ENCODE measurements at regions of chr6 and their contacts with region 1.

Region 1: GRCh38 chr6:2749969-2750600 is 637 bp downstream of the MYLK4 start:
- DNase-seq: peak; percentile 53
- ATAC-seq: peak; percentile 76
- H3K4me3 Mint-ChIP-seq: no peak overlapping the region
- H3K27ac Mint-ChIP-seq: no peak overlapping the region
- H3K4me1 Mint-ChIP-seq: peaks cover 13% of the 10 kb centered on the region
- H3K27me3 Mint-ChIP-seq: peaks cover 14% of the 10 kb centered on the region
- CTCF ChIP-seq: peak; percentile 79

Region 2: GRCh38 chr6:1596088-1596852 is 1153.8 kb before region 1 on chr6:
- CTCF ChIA-PET with region 1: interaction called, 18 read pairs
- POLR2A ChIA-PET with region 1: no interaction called
- intact Hi-C with region 1: loop called (anchors 1 kb)
- DNase-seq: peak; percentile 50
- ATAC-seq: peak; percentile 87
- H3K4me3 Mint-ChIP-seq: no peak overlapping the region
- H3K27ac Mint-ChIP-seq: no peak overlapping the region
- H3K4me1 Mint-ChIP-seq: peaks cover 4% of the 10 kb centered on the region
- H3K27me3 Mint-ChIP-seq: peaks cover 49% of the 10 kb centered on the region
- CTCF ChIP-seq: no peak

Region 3: DNA sequence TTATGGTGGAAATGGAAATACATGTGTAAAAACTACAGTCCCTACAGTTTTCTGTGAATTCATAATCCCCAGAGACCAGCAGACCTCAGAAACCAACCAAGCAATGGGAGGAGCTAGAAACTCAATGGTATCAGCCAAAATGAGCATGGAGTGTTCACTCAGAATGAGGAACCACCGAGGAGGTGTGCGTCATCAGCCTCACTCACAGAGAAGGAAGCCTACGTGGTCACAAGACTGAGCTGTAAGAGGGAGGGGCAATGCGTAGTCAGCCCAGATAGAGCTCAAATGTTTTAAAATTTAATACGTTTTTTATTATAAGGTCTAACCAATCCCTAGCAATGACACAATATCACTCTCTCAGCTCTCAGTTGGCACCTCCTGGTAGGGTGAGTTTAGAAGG is 16.8 kb before region 1 on chr6:
- CTCF ChIA-PET with region 1: interaction called, 50 read pairs
- POLR2A ChIA-PET with region 1: interaction called, 14 read pairs
- intact Hi-C with region 1: loop called (anchors 1 kb)
- DNase-seq: peak; percentile 52
- ATAC-seq: peak; percentile 99
- H3K4me3 Mint-ChIP-seq: peak overlapping the region; percentile 24
- H3K27ac Mint-ChIP-seq: peak overlapping the region; percentile 85
- H3K4me1 Mint-ChIP-seq: peaks cover 19% of the 10 kb centered on the region
- H3K27me3 Mint-ChIP-seq: no peaks in the 10 kb centered on the region
- CTCF ChIP-seq: no peak

Region 4: GRCh38 chr6:2738373-2738979 is 11.6 kb before region 1 on chr6:
- CTCF ChIA-PET with region 1: interaction called, 50 read pairs
- POLR2A ChIA-PET with region 1: interaction called, 14 read pairs
- intact Hi-C with region 1: loop called (anchors 1 kb)
- DNase-seq: no peak
- ATAC-seq: no peak
- H3K4me3 Mint-ChIP-seq: no peak overlapping the region
- H3K27ac Mint-ChIP-seq: no peak overlapping the region
- H3K4me1 Mint-ChIP-seq: peaks cover 10% of the 10 kb centered on the region
- H3K27me3 Mint-ChIP-seq: no peaks in the 10 kb centered on the region
- CTCF ChIP-seq: no peak

Region 5: DNA sequence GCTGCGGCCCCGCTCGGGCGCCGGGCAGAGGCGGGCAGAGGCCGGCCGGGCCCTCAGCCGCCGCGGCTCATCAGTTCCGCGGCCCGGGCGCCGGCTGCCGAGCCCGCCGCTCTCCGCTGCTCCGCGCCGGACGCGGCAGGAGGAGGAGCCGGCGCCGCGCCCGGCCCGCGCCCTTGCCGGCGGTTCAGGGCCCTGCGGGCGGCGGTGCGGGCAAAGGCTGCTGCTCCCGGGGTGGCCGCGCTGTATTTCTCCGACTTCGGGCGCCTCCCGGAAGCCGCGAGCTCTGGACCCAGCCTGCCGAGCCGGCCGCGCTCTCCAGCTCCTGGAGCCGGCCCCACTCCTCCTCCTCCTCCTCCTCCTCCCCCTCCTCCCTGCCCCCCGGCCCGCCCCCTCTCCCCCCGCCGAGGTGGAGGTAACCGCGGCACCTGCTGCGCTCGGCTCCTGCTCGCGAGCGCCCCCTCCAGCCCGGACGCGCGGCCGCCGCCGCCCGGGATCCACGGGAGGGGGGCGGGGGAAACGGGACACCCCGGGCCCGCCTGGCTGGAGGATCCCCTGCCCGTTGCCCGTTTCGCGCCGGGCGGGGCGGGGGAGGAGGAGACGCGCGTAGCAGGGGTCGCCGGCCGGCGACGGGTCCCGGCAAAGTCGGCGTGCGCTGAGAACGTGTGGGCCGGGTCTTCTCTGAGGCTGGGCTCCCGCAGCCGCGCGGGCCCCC is 706.8 kb after region 1 on chr6 and contains the start of gene SLC22A23:
- CTCF ChIA-PET with region 1: no interaction called
- POLR2A ChIA-PET with region 1: no interaction called
- intact Hi-C with region 1: no loop called
- DNase-seq: peak; percentile 67
- ATAC-seq: peak; percentile 73
- H3K4me3 Mint-ChIP-seq: peak within 1 kb of the TSS; percentile 68
- H3K27ac Mint-ChIP-seq: peak within 1 kb of the TSS; percentile 4
- H3K4me1 Mint-ChIP-seq: peaks cover 5% of the 10 kb centered on the region
- H3K27me3 Mint-ChIP-seq: peaks cover 25% of the 10 kb centered on the region
- CTCF ChIP-seq: no peak
- total RNA-seq, gene SLC22A23: 0.24 and 0.95 TPM in 2 replicates

Measured in activated B cell treated with CpG ODN at 0.5 μM for 24 hours (primary cell).